ENCODE measurements at regions of chr4 and their contacts with region 1.

Region 1: GRCh38 chr4:16001484-16001858 is 38.5 kb upstream of the FGFBP2 start:
- DNase-seq: peak; percentile 60 to 76
- H3K4me3 ChIP-seq: no peak overlapping the region
- H3K27ac ChIP-seq: no peak overlapping the region
- H3K4me1 ChIP-seq: peaks cover 0 to 5% (median 2%) of the 10 kb centered on the region in 4 donors
- H3K27me3 ChIP-seq: no peaks in the 10 kb centered on the region
- CTCF ChIP-seq: peak; percentile 68 to 73

Region 2: GRCh38 chr4:15729910-15730533 is 271.4 kb before region 1 on chr4:
- intact Hi-C with region 1: loop called (anchors 5 kb)
- DNase-seq: no peak
- H3K4me3 ChIP-seq: no peak overlapping the region
- H3K27ac ChIP-seq: no peak overlapping the region
- H3K4me1 ChIP-seq: no peaks in the 10 kb centered on the region
- H3K27me3 ChIP-seq: no peaks in the 10 kb centered on the region
- CTCF ChIP-seq: peak; percentile 58 to 86

Region 3: GRCh38 chr4:15832523-15833451 is 168.7 kb before region 1 on chr4:
- intact Hi-C with region 1: no loop called
- DNase-seq: no peak
- H3K4me3 ChIP-seq: no peak overlapping the region
- H3K27ac ChIP-seq: peak overlapping the region; percentile 55 to 62
- H3K4me1 ChIP-seq: peaks cover 0 to 5% (median 0%) of the 10 kb centered on the region in 4 donors
- H3K27me3 ChIP-seq: no peaks in the 10 kb centered on the region
- CTCF ChIP-seq: no peak

Measured in tibial artery (tissue), 4 donors.